ENCODE measurements at regions of chr11 and their contacts with region 1.

Region 1: GRCh38 chr11:58567889-58568512 is 7.7 kb downstream of the LPXN start:
- DNase-seq: peak in 2 of 3 donors; percentile 62 to 73
- ATAC-seq: peak; percentile 85
- H3K4me3 ChIP-seq: no peak overlapping the region
- H3K4me1 ChIP-seq: peaks cover under 1% of the 10 kb centered on the region
- CTCF ChIP-seq: peak; percentile 65

Region 2: DNA sequence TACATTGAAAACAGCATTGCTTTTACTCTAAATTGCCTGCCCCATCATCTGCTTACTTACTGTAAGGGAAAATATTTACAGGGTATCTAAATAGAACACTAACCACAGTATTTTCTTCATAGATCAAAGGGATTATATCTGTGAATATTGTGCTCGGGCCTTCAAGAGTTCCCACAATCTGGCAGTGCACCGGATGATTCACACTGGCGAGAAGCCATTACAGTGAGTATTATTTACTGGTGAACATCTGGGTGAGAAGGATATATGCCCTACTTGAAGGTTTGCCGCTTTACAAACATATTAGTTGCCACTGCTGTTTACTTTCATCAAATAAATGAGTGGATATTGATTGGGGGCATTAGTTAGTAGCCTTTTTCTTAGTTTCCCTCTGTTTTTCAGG is 48.6 kb after region 1 on chr11:
- intact Hi-C with region 1: loop called in 1 of 2 experiments (anchors 10 kb)
- DNase-seq: no peak
- ATAC-seq: peak; percentile 37
- H3K4me3 ChIP-seq: no peak overlapping the region
- H3K4me1 ChIP-seq: no peaks in the 10 kb centered on the region
- CTCF ChIP-seq: no peak

Region 3: DNA sequence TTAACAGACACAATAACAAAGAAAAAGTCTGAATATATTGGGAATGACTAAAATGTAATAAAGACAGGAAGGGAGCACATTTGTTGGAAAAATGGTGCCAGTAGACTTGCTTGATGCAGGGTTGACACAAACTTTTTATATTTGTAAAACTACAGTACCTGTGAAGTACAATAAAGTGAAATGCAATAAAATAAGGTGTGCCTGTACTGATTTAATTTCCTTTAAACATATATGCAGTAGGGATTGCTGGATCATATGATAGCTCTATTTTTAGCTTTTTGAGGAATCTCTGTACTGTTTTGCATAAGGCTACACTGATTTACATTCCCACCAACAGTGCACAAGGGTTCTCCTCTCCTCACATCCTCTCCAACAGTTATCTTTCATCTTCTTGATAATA is 288.8 kb after region 1 on chr11:
- intact Hi-C with region 1: no loop called
- DNase-seq: no peak
- ATAC-seq: peak; percentile 72
- H3K4me3 ChIP-seq: no peak overlapping the region
- H3K4me1 ChIP-seq: no peaks in the 10 kb centered on the region
- CTCF ChIP-seq: no peak